ENCODE measurements at regions of chr13 and their contacts with region 1.

Region 1: GRCh38 chr13:79423801-79424642 is 18.0 kb upstream of the RBM26 start:
- DNase-seq: no peak
- H3K4me3 ChIP-seq: no peak overlapping the region
- H3K27ac ChIP-seq: no peak overlapping the region
- H3K4me1 ChIP-seq: peaks cover 0 to 3% (median 0%) of the 10 kb centered on the region in 4 donors
- H3K27me3 ChIP-seq: no peaks in the 10 kb centered on the region
- CTCF ChIP-seq: peak; percentile 60 to 76 (median 73)
- EP300 ChIP-seq: no peak
- POLR2A ChIP-seq: no peak

Region 2: DNA sequence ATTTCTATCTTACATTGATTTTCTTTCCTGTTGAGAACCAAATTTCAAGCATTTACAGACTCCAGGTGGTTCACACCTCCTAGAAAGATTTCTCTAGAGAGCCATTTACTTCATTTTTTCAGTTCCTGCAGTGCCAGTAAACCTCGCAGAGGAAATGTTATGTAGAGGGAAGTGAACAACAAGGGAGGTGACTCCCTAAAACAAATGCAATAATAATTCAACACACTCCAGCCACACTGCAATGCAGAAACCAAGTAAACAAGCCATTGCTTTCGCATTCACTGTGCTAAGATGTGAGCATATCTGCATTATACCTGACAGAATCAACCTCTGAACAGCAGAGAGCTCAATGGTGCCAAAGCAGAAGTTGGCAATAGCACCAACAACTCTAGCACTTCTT is 233.1 kb before region 1 on chr13:
- in situ Hi-C with region 1: no loop called
- intact Hi-C with region 1: no loop called
- DNase-seq: no peak
- H3K4me3 ChIP-seq: no peak overlapping the region
- H3K27ac ChIP-seq: no peak overlapping the region
- H3K4me1 ChIP-seq: no peaks in the 10 kb centered on the region
- H3K27me3 ChIP-seq: no peaks in the 10 kb centered on the region
- CTCF ChIP-seq: no peak
- EP300 ChIP-seq: no peak
- POLR2A ChIP-seq: no peak

Region 3: GRCh38 chr13:79405829-79406596 is 18.0 kb before region 1 on chr13 and contains the start of gene RBM26:
- in situ Hi-C with region 1: no loop called
- intact Hi-C with region 1: no loop called
- DNase-seq: peak; percentile 94
- H3K4me3 ChIP-seq: peak within 1 kb of the TSS; percentile 65 to 97 (median 91)
- H3K27ac ChIP-seq: peak within 1 kb of the TSS; percentile 95 to 98 (median 96)
- H3K4me1 ChIP-seq: peaks cover 28 to 73% (median 48%) of the 10 kb centered on the region in 4 donors
- H3K27me3 ChIP-seq: no peaks in the 10 kb centered on the region
- CTCF ChIP-seq: peak in 2 of 5 experiments; percentile 44
- EP300 ChIP-seq: no peak
- POLR2A ChIP-seq: peak; percentile 70
- total RNA-seq, gene RBM26: 13.9 to 52.7 (median 45.1) TPM

Region 4: GRCh38 chr13:79533781-79534400 is 109.9 kb after region 1 on chr13:
- in situ Hi-C with region 1: loop called (anchors 5 to 10 kb)
- intact Hi-C with region 1: no loop called
- DNase-seq: no peak
- H3K4me3 ChIP-seq: no peak overlapping the region
- H3K27ac ChIP-seq: no peak overlapping the region
- H3K4me1 ChIP-seq: no peaks in the 10 kb centered on the region
- H3K27me3 ChIP-seq: no peaks in the 10 kb centered on the region
- CTCF ChIP-seq: no peak
- EP300 ChIP-seq: no peak
- POLR2A ChIP-seq: no peak

Region 5: DNA sequence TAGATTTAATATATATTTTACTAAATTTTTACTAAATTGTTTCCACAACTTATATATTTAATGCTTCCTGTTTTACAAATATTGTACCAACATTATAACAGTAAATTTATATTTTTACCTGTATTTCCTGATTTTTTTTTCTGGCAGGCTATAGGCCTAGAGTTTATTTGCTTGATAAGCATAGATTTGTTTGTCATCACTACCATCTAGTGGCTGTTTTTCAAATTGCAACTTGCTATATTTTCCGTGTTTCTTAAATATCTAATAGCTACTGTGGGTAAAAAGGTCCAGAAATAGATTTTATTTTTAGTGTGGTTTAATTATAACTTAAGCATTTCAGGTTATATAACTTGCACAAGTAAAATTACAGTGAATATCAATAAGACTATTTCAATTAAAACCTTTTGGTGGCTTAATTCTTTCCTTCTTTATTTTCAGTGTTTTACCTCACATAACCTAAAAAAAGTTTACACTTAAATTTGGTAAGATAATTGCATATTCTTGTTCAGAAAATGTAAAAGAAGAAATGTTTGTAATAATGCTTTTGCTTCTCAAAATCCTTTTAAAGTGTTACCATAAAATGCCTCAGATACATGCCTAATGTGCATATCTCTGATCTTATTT is 117.5 kb after region 1 on chr13:
- in situ Hi-C with region 1: loop called (anchors 5 to 10 kb)
- intact Hi-C with region 1: loop called (anchors 2 kb)
- DNase-seq: no peak
- H3K4me3 ChIP-seq: no peak overlapping the region
- H3K27ac ChIP-seq: no peak overlapping the region
- H3K4me1 ChIP-seq: peaks cover 0 to 7% (median 0%) of the 10 kb centered on the region in 4 donors
- H3K27me3 ChIP-seq: no peaks in the 10 kb centered on the region
- CTCF ChIP-seq: peak; percentile 88 to 93 (median 89)
- EP300 ChIP-seq: no peak
- POLR2A ChIP-seq: no peak

Measured in transverse colon (tissue), 4 donors.